ENCODE measurements at regions of chr3 and their contacts with region 1.

Region 1: DNA sequence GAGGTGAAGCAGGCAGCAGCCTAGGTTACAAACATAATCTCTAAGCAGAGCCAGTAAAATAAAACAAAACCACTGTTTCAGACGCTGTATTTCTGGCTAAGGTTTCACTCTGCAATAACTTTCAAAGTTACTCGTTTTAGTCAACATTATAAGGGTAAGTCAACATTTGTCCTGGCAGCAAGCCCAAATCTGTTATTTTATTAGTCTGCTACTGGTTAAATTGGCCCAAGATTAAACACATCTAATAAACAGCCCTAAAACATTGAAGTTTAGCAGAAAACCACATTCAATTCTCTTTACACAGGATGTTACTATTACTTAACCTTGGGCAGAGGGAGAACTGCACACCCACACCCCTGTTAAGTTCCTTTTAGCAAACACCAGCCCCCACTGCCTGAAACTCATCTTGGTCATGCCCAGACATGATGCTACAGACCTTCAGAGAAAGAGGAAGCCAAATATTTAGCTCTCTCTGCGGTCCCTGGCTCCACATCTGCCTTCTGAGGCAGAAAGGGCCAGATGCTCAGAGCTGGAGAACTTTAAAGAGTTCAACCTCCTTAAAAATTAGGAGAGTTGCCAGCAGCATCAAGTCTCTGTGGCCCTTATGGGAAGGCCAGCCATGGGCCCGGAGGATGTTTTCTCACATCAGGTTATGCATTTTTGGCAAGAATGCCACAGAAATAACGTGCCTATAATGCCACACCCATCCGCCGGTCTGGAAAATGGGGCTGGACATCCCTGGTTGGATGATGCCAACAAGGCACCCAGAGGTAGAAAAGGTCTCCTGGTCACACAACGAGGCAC is 17.9 kb downstream of the ARHGEF3 start:
- DNase-seq: peak; percentile 59
- ATAC-seq: peak; percentile 88
- H3K4me3 Mint-ChIP-seq: peak overlapping the region; percentile 76
- H3K27ac Mint-ChIP-seq: peak overlapping the region; percentile 90
- H3K4me1 Mint-ChIP-seq: peaks cover 85% of the 10 kb centered on the region
- H3K27me3 Mint-ChIP-seq: no peaks in the 10 kb centered on the region

Region 2: DNA sequence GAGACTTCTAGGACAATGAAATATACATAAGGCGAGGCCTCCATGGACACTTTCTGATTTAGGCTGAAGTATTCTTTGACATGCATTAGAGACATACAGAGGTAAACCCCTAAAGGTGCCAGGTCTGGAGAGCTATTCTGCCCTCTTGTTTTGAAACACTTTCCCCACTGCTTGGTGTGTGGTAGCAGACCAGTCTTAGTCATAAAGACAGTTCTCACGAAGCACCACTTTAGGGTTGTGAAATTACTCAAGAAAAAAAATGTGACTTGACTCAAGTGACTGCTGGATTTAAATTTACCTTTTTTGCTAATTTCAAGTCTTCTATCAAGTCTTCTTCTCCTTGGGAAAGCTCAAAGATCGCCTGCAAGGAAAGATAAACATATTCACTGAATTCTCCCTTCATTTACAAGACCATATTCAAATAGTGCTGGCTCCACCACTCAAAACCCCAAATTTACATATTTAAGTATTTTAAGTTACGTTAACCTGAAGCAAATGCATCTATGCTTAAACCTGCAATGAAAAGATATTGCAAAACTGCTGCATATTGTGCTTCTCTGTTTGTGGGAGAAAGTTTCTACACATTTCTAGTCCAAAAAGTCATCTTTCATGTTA is 30.5 kb before region 1 on chr3:
- POLR2A ChIA-PET with region 1: interaction called, 41 read pairs
- DNase-seq: no peak
- ATAC-seq: peak; percentile 76
- H3K4me3 Mint-ChIP-seq: peak overlapping the region; percentile 91
- H3K27ac Mint-ChIP-seq: peak overlapping the region; percentile 87
- H3K4me1 Mint-ChIP-seq: peaks cover 61% of the 10 kb centered on the region
- H3K27me3 Mint-ChIP-seq: no peaks in the 10 kb centered on the region

Measured in activated naive CD8-positive, alpha-beta T cell treated with anti-CD3 and anti-CD28 coated beads, Interleukin-2, amount 10 ng/mL, durations not matched to agents 7 days and 5 days (primary cell).